Colonic mucosa (tissue), 4 donors: ENCODE measurements at regions of chr15 and their contacts with region 1.

Region 1: GRCh38 chr15:74768771-74769342 is 13.0 kb upstream of the CSK start:
- DNase-seq: peak; percentile 54
- H3K4me3 ChIP-seq: no peak overlapping the region
- H3K27ac ChIP-seq: no peak overlapping the region
- H3K4me1 ChIP-seq: peaks cover 16% of the 10 kb centered on the region
- H3K27me3 ChIP-seq: no peaks in the 10 kb centered on the region
- CTCF ChIP-seq: peak; percentile 62

Region 2: GRCh38 chr15:74373731-74374647 is 394.9 kb before region 1 on chr15:
- intact Hi-C with region 1: loop called (anchors 10 kb)
- DNase-seq: peak; percentile 95
- H3K4me3 ChIP-seq: peak overlapping the region; percentile 55
- H3K27ac ChIP-seq: no peak overlapping the region
- H3K4me1 ChIP-seq: no peaks in the 10 kb centered on the region
- H3K27me3 ChIP-seq: no peaks in the 10 kb centered on the region
- CTCF ChIP-seq: peak; percentile 87

Region 3: GRCh38 chr15:74635228-74635627 is 133.6 kb before region 1 on chr15:
- intact Hi-C with region 1: loop called (anchors 1 kb)
- DNase-seq: peak; percentile 74
- H3K4me3 ChIP-seq: no peak overlapping the region
- H3K27ac ChIP-seq: no peak overlapping the region
- H3K4me1 ChIP-seq: no peaks in the 10 kb centered on the region
- H3K27me3 ChIP-seq: no peaks in the 10 kb centered on the region
- CTCF ChIP-seq: peak; percentile 88

Region 4: GRCh38 chr15:74799856-74800547 is 31.1 kb after region 1 on chr15:
- intact Hi-C with region 1: loop called (anchors 1 kb)
- DNase-seq: peak; percentile 89
- H3K4me3 ChIP-seq: no peak overlapping the region
- H3K27ac ChIP-seq: peak overlapping the region; percentile 56
- H3K4me1 ChIP-seq: peaks cover 5% of the 10 kb centered on the region
- H3K27me3 ChIP-seq: no peaks in the 10 kb centered on the region
- CTCF ChIP-seq: peak; percentile 98

Region 5: GRCh38 chr15:74835307-74835823 is 66.5 kb after region 1 on chr15:
- intact Hi-C with region 1: loop called (anchors 5 kb)
- DNase-seq: peak; percentile 80
- H3K4me3 ChIP-seq: no peak overlapping the region
- H3K27ac ChIP-seq: no peak overlapping the region
- H3K4me1 ChIP-seq: no peaks in the 10 kb centered on the region
- H3K27me3 ChIP-seq: no peaks in the 10 kb centered on the region
- CTCF ChIP-seq: peak; percentile 77

Region 6: DNA sequence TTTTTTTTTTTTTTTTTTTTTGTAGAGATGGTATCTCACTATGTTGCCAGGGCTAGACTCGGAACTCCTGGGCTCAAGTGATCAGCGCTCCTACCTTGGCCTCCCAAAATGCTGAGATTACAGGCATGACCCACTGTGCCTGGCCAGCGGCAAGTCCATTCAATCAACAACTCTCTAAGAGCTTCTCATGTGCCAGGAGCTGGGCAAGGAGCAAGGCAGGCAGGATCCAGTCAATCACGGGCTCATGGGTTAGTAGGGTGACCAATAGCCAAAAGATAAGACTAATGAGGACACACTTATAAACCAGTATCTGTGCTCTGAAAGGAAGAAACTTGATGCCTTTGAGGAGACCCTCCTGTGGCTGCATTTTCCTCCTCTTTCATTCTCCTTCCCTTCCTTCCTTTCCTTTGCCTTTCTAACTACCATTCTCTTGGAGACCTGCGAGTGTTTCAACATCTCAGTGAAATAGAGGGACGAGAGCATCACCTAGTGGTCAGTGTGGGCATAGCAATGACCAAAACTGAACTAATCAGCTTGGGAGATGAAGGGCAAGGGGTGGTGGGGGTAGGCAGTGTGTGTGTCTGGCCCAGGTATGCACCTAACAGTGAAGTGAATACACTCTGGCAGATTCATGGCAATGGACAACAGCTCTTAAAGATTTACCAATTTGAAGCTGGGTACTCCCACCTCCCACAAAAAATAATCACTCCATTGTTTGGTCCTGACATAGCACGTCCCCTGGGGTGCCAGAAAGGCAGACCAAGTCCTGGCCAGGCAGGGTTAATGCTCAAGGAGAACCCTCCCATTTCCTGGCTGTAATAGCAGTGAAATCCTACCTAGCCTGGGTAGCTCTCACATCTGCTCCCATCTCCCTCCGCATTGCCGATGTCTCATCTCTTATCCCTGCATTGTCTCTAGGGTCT is 181.5 kb after region 1 on chr15:
- intact Hi-C with region 1: loop called (anchors 2 kb)
- DNase-seq: peak; percentile 87
- H3K4me3 ChIP-seq: no peak overlapping the region
- H3K27ac ChIP-seq: no peak overlapping the region
- H3K4me1 ChIP-seq: peaks cover 3% of the 10 kb centered on the region
- H3K27me3 ChIP-seq: no peaks in the 10 kb centered on the region
- CTCF ChIP-seq: peak; percentile 96